CD8-positive, alpha-beta T cell (primary cell): ENCODE measurements at regions of chr1 and their contacts with region 1.

Region 1: DNA sequence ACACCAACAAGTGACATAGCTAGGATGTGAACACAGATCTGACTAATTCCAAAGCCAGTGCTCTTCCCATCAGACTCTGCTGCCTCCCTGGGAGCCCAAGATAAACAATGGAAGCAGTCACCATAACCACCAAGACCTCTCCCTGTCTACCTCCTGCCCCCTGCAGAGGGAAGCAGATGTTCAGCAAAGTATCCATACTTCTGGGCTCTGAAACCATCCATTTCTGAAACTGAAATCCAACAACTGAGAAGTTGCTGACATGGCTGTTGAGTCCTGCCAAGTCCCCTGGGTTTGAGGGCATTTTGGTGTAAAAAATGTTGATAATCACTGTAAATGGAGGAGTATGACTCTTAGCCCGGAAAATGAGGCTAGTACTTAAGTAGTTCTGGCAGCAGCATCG is 102.1 kb downstream of the TYW3 start:
- DNase-seq: no peak
- ATAC-seq: no peak
- H3K4me3 ChIP-seq: no peak overlapping the region
- H3K4me3 Mint-ChIP-seq: no peak overlapping the region
- H3K27ac ChIP-seq: no peak overlapping the region
- H3K27ac Mint-ChIP-seq: no peak overlapping the region
- H3K4me1 ChIP-seq: no peaks in the 10 kb centered on the region
- H3K4me1 Mint-ChIP-seq: no peaks in the 10 kb centered on the region
- H3K27me3 ChIP-seq: no peaks in the 10 kb centered on the region
- H3K27me3 Mint-ChIP-seq: peaks cover 4% of the 10 kb centered on the region
- CTCF ChIP-seq: no peak

Region 2: DNA sequence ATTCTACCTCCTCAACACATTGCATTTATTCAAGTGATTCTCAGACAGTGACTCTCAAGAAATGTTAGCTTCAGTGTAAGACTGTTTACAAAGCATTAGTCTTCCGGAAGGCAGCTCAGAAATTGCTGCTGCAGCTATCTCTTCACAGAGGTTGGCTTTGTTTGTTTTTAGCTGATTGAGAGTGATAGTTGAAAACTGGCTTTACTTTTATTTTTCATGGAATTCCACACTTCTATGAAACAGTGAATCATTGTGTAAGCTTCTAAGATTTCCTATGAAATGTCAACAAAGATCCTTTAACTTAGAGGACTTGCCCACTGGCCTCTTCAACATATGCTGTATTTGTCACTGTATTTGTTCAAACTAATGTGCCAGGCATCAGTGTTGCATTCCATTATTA is 478.6 kb before region 1 on chr1:
- CTCF ChIA-PET with region 1: no interaction called
- POLR2A ChIA-PET with region 1: no interaction called
- intact Hi-C with region 1: no loop called
- DNase-seq: no peak
- ATAC-seq: no peak
- H3K4me3 ChIP-seq: no peak overlapping the region
- H3K4me3 Mint-ChIP-seq: no peak overlapping the region
- H3K27ac ChIP-seq: no peak overlapping the region
- H3K27ac Mint-ChIP-seq: no peak overlapping the region
- H3K4me1 ChIP-seq: no peaks in the 10 kb centered on the region
- H3K4me1 Mint-ChIP-seq: no peaks in the 10 kb centered on the region
- H3K27me3 ChIP-seq: no peaks in the 10 kb centered on the region
- H3K27me3 Mint-ChIP-seq: no peaks in the 10 kb centered on the region
- CTCF ChIP-seq: no peak

Region 3: GRCh38 chr1:74847715-74848114 is 12.7 kb after region 1 on chr1:
- CTCF ChIA-PET with region 1: no interaction called
- POLR2A ChIA-PET with region 1: no interaction called
- intact Hi-C with region 1: loop called in 1 of 2 experiments (anchors 2 kb)
- DNase-seq: no peak
- ATAC-seq: no peak
- H3K4me3 ChIP-seq: no peak overlapping the region
- H3K4me3 Mint-ChIP-seq: no peak overlapping the region
- H3K27ac ChIP-seq: no peak overlapping the region
- H3K27ac Mint-ChIP-seq: no peak overlapping the region
- H3K4me1 ChIP-seq: no peaks in the 10 kb centered on the region
- H3K4me1 Mint-ChIP-seq: no peaks in the 10 kb centered on the region
- H3K27me3 ChIP-seq: no peaks in the 10 kb centered on the region
- H3K27me3 Mint-ChIP-seq: no peaks in the 10 kb centered on the region
- CTCF ChIP-seq: no peak

Region 4: DNA sequence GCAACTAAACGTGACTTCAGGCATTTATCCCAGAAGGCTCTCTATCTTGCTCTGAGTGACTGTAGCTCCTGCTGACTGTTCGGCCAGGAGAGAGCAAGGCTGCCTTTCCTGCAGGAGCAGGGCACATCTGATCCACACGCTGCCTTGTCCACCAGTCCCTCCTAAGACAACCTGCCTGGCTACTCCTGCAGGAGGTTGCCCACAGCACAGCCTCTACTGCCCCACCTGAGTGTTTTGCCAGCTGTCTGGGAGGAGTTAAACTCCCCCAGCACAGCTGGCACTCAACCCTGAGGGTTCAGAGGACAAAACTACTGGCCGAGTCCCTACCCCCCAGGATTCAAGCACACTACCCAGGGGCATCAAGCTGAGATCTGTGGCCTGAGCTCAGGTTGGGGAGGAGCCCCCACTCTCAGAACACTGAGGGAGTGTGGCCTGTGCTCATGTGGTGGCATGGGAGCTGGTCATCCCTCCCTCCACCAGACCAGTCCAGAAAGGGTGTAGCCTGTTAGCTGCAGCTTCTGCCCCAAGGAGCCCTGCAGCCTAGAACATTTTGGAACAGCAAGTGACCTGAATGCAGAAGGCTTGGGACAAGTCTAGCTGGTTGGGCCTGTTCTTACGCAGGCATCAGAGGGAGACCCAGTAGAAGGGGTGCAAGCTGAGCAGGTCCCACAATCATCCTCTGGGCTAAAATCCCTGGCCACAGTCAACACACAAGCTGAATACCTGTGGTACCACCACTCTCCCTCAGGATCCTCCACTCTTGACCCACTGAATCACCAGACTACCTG is 538.7 kb after region 1 on chr1:
- CTCF ChIA-PET with region 1: no interaction called
- POLR2A ChIA-PET with region 1: no interaction called
- intact Hi-C with region 1: no loop called
- DNase-seq: no peak
- ATAC-seq: no peak
- H3K4me3 ChIP-seq: no peak overlapping the region
- H3K4me3 Mint-ChIP-seq: no peak overlapping the region
- H3K27ac ChIP-seq: no peak overlapping the region
- H3K27ac Mint-ChIP-seq: no peak overlapping the region
- H3K4me1 ChIP-seq: no peaks in the 10 kb centered on the region
- H3K4me1 Mint-ChIP-seq: no peaks in the 10 kb centered on the region
- H3K27me3 ChIP-seq: no peaks in the 10 kb centered on the region
- H3K27me3 Mint-ChIP-seq: no peaks in the 10 kb centered on the region
- CTCF ChIP-seq: no peak